OCI-LY7 (cell line): ENCODE measurements at regions of chr12 and their contacts with region 1.

Region 1: GRCh38 chr12:105053116-105053572 is 31.1 kb downstream of the ALDH1L2 start:
- DNase-seq: peak; percentile 87
- H3K4me3 ChIP-seq: no peak overlapping the region
- H3K27ac ChIP-seq: peak overlapping the region; percentile 14
- H3K4me1 ChIP-seq: peaks cover 24% of the 10 kb centered on the region
- CTCF ChIP-seq: peak; percentile 99

Region 2: GRCh38 chr12:104201238-104202001 is 851.7 kb before region 1 on chr12:
- CTCF ChIA-PET with region 1: no interaction called
- POLR2A ChIA-PET with region 1: no interaction called
- intact Hi-C with region 1: loop called (anchors 2 kb)
- DNase-seq: peak; percentile 71
- H3K4me3 ChIP-seq: no peak overlapping the region
- H3K27ac ChIP-seq: no peak overlapping the region
- H3K4me1 ChIP-seq: no peaks in the 10 kb centered on the region
- CTCF ChIP-seq: peak; percentile 95

Region 3: GRCh38 chr12:104680066-104680465 is 373.1 kb before region 1 on chr12:
- CTCF ChIA-PET with region 1: no interaction called
- POLR2A ChIA-PET with region 1: no interaction called
- intact Hi-C with region 1: loop called (anchors 2 kb)
- DNase-seq: peak; percentile 62
- H3K4me3 ChIP-seq: no peak overlapping the region
- H3K27ac ChIP-seq: no peak overlapping the region
- H3K4me1 ChIP-seq: peaks cover 38% of the 10 kb centered on the region
- CTCF ChIP-seq: peak; percentile 75

Region 4: DNA sequence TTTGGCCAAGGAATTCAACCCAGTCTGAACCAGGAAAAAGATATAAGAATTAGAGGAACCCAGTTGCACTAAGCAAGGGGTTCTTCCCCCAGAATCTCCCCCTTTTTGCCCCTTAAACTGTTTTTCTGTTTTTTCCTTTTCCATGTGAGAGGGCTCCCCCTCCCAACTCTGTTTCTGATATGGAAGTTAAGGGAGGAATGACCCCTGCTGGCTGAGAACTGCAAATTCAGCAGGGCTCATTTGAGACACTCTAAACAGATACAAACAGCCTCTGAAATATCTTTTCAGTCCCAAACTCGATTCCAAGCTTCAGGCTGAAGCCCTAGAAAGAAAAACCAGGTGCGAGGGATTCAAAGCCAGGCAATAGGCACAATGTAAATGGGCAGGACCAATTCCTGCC is 227.7 kb before region 1 on chr12:
- CTCF ChIA-PET with region 1: no interaction called
- POLR2A ChIA-PET with region 1: no interaction called
- intact Hi-C with region 1: loop called (anchors 10 kb)
- DNase-seq: peak; percentile 17
- H3K4me3 ChIP-seq: no peak overlapping the region
- H3K27ac ChIP-seq: no peak overlapping the region
- H3K4me1 ChIP-seq: no peaks in the 10 kb centered on the region
- CTCF ChIP-seq: peak; percentile 62

Region 5: GRCh38 chr12:104928036-104928745 is 125.0 kb before region 1 on chr12:
- CTCF ChIA-PET with region 1: no interaction called
- POLR2A ChIA-PET with region 1: no interaction called
- intact Hi-C with region 1: no loop called
- DNase-seq: no peak
- H3K4me3 ChIP-seq: no peak overlapping the region
- H3K27ac ChIP-seq: no peak overlapping the region
- H3K4me1 ChIP-seq: no peaks in the 10 kb centered on the region
- CTCF ChIP-seq: no peak

Region 6: DNA sequence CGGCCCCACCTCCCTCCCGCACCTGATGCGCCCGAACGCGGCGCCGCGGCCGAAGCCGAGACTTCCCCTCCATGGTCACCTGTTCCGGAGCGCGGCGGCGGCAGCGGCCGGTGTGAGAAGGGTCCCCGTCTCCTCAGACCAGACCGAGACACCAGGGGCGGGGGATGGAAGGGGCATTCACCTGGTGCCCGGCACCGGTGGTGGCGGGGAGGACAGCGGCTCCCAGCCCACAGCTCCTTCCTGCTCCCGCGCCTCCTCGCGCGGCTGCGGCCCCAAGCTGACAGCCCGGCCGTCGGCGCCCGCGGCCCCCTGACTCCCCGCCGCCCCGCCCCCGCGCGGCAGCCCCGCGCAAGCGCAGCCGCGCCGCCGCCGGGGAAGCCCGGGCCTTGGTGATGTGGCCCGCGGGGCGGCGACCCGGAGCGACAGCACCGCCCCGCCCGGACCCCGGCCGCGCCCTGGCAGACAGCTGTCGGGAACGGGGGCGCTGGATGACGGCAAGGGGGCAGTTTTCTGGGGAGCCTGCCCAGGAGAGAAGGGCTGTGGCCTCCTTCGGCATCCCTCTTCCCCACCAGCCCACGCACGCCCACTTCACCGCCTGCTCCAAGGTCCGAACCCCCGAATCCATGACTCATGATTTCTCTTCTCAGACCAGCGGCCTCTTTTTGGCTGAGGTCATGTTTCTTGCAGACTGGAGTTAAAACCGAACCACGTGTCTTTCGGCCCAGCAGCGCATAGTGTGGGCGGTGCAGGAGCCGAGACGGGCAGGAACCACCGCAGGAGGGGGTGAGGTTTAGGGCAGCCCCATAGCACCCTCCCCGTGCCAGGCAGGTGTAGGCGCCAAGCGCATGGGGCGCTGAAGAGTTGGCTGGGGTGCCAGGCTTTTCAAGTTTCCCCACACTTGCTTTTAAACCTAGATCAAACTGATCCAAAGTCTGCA is 94.9 kb before region 1 on chr12 and contains the start of gene SLC41A2:
- CTCF ChIA-PET with region 1: no interaction called
- POLR2A ChIA-PET with region 1: no interaction called
- intact Hi-C with region 1: loop called (anchors 1 kb)
- DNase-seq: peak; percentile 84
- H3K4me3 ChIP-seq: peak within 1 kb of the TSS; percentile 78
- H3K27ac ChIP-seq: peak within 1 kb of the TSS; percentile 22
- H3K4me1 ChIP-seq: peaks cover 22% of the 10 kb centered on the region
- CTCF ChIP-seq: peak; percentile 64
- total RNA-seq, gene SLC41A2: 4.6 and 5.3 TPM in 2 replicates

Region 7: GRCh38 chr12:105253882-105254513 is 200.9 kb after region 1 on chr12:
- CTCF ChIA-PET with region 1: no interaction called
- POLR2A ChIA-PET with region 1: no interaction called
- intact Hi-C with region 1: no loop called
- DNase-seq: no peak
- H3K4me3 ChIP-seq: no peak overlapping the region
- H3K27ac ChIP-seq: no peak overlapping the region
- H3K4me1 ChIP-seq: no peaks in the 10 kb centered on the region
- CTCF ChIP-seq: no peak